Posterior cingulate gyrus (tissue), 11 donors: ENCODE measurements at regions of chr17 and their contacts with region 1.

Region 1: GRCh38 chr17:72556944-72557826 is 436.4 kb downstream of the SOX9 start:
- DNase-seq: peak; percentile 45 to 96 (median 73)

Region 2: GRCh38 chr17:72404872-72405271 is 152.3 kb before region 1 on chr17:
- intact Hi-C with region 1: no loop called
- DNase-seq: peak in 1 of 10 donors; percentile 7

Region 3: DNA sequence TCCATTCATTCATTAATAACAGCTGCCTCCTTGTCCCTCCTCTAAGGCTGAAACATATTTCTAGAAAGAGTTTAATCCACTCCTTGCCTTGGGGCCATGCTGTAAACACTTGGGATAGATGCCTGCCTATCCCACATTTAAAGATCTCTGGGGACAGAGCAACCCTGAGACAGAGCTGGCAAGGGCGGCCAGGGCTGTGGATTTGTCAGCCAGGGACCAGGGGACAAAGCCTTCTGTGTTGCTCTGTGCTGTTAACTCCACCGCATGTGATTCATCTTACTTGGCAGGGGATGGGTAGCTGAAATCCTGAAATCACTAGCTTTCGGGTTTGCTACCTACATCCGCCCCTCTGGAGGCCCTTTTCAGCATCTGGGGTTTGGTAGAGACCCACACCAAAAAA is 142.4 kb after region 1 on chr17:
- intact Hi-C with region 1: loop called (anchors 10 kb)
- DNase-seq: peak; percentile 28 to 93 (median 63)

Region 4: GRCh38 chr17:72890711-72891110 is 333.5 kb after region 1 on chr17:
- intact Hi-C with region 1: no loop called
- DNase-seq: no peak